ENCODE measurements at regions of chr1 and their contacts with region 1.

Region 1: DNA sequence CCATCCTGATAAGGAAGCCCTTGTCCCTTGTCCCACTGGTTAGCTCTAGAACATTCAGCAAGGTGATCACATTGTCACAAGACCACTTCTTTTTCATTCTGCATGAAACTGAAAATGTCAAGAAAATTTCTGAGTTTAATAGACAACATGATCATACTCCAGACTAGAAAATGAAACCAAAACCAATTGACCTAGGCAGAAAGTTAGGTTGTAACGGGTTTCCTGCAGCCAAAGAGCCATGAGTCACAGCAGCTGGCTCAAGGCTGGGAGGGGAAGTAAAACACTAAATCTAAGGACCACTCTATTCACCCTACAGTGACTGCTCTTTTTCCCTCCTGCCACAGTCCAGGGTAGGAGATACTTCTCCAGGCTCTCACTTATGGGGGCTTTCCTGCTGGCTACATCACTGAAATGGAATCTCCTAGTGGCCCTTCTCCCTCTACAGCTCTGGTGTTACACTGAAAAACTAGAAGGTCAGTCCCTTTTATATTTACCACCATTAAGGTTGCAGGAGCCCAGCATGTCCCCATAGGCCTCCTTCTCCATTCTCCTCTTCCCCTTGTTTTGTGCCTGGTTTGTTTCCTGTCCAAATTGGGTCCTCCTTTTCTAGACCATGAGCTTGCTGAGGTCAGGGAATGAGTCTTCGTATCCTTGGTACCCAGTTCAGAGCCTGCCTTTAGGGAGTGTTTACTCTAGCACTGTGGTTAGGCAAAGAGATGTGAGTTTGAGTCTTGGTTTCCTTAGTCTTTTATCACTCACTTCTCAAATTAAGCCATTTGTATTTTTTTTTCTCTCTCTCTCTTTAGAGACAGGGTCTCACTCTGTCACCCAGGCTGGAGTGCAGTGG is 236.5 kb upstream of the JUN start:
- DNase-seq: no peak
- ATAC-seq: peak; percentile 62

Region 2: GRCh38 chr1:58968360-58968952 is 51.9 kb before region 1 on chr1:
- intact Hi-C with region 1: loop called (anchors 5 kb)
- DNase-seq: peak; percentile 88
- ATAC-seq: peak; percentile 73

Region 3: DNA sequence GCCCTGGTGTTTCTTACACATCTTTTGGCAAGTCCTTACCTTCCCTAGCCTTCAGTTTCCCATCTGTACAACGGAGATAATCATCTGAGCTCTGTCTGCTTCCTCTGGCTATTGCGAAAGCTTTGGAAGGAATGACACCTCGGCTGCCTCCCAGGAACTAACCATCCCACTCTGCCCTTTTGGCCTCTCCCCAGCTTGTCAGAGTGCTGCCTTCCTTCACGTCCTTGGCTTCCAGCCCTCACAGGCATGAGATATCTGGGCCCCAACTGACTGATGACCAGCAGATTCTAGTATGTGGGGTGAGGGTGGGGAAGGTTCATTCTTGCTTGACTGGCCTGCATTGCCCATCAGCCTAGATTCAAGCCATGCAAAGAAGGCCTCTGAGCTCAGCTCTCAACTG is 23.4 kb after region 1 on chr1:
- intact Hi-C with region 1: loop called (anchors 1 kb)
- DNase-seq: peak; percentile 80
- ATAC-seq: peak; percentile 90